ENCODE measurements at regions of chr12 and their contacts with region 1.

Region 1: DNA sequence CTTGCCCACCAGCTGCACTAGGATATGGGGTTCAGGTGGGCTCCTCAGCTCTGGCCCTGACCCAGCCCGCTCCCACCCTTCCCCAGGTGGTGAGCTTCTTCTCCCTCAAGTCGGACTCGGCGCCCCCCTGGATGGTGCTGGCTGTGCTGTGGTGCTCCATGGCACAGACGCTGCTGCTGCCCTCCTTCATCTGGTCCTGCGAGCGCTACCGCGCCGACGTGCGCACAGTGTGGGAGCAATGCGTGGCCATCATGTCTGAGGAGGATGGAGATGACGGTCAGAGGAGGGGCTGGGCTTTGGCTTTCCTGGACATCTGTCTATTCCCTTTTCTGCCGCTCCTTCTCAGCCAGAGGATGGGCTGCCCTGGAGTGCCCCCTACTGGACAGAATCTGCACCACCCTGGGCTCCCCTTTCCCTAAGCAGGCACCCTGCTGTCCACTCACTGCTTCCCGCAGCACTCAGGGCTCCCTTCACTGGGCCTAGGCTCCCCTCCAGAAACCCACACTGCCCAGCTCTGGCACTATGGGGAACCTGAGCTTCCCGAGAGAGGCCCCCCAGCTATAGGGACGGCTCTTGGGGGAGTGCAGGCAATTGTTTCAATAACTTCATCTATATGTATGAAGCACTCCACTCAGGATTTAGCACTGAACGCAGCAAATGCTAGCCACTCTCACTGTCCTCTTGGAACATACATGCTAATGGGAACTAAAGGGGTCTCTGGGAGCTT is 2.6 kb upstream of the P3H3 start:
- DNase-seq: peak; percentile 73 to 91 (median 90)
- H3K4me3 ChIP-seq: peak overlapping the region; percentile 22
- H3K27ac ChIP-seq: no peak overlapping the region
- H3K4me1 ChIP-seq: peaks cover 14% of the 10 kb centered on the region
- H3K27me3 ChIP-seq: no peaks in the 10 kb centered on the region
- CTCF ChIP-seq: peak; percentile 87 to 91 (median 89)
- EP300 ChIP-seq: no peak
- POLR2A ChIP-seq: no peak

Region 2: GRCh38 chr12:6688999-6689882 is 136.3 kb before region 1 on chr12 and contains the start of gene ZNF384:
- intact Hi-C with region 1: no loop called
- DNase-seq: peak; percentile 96 to 98 (median 97)
- H3K4me3 ChIP-seq: peak within 1 kb of the TSS; percentile 69
- H3K27ac ChIP-seq: peak within 1 kb of the TSS; percentile 80 to 93
- H3K4me1 ChIP-seq: peaks cover 10% of the 10 kb centered on the region
- H3K27me3 ChIP-seq: no peaks in the 10 kb centered on the region
- CTCF ChIP-seq: peak in 2 of 3 donors; percentile 58
- EP300 ChIP-seq: peak; percentile 83
- POLR2A ChIP-seq: peak; percentile 56
- total RNA-seq, gene ZNF384: 22.1 to 64.9 (median 58.2) TPM

Region 3: DNA sequence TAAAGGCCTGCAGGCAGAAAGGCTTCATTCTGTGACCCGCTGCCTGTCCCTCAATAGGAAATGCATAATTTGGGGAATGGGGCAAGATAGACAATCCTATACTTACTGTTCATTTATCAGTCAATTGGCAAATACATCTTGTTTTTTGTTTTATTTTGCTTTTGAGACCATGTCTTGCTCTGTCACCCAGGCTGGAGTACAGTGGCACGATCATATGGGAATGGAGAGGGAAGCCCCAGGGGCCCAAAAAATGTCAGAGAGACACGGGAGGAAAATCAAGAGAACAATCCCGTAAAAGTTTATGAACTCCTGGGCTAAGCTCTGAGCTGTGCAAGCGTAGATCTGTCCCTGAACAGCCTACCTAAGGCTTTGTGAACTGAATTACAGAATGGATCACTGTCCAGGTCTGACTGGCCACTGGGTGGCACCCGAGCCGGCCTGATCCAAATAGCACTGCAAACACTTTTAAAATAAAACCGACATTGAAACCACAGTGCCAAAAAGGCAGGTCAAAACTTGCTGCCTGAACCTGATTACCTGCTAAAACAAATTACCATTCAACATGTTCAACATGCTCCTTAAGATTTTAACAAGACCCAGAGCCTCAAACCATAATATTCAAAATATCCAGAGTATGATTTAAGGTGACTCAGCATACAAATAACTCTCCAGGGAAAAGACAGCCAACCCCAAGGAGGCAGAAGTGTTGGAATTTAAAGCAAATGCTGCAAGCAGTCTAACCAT is 89.9 kb before region 1 on chr12:
- intact Hi-C with region 1: loop called in 3 of 4 experiments (anchors 5 kb)
- DNase-seq: peak; percentile 54 to 79 (median 75)
- H3K4me3 ChIP-seq: no peak overlapping the region
- H3K27ac ChIP-seq: no peak overlapping the region
- H3K4me1 ChIP-seq: no peaks in the 10 kb centered on the region
- H3K27me3 ChIP-seq: no peaks in the 10 kb centered on the region
- CTCF ChIP-seq: peak; percentile 63 to 76 (median 71)
- EP300 ChIP-seq: no peak
- POLR2A ChIP-seq: no peak